ENCODE measurements at regions of chr3 and their contacts with region 1.

Region 1: GRCh38 chr3:114510201-114510600 is 216.4 kb downstream of the TIGIT start:
- DNase-seq: no peak
- H3K4me3 ChIP-seq: no peak overlapping the region
- H3K27ac ChIP-seq: no peak overlapping the region
- H3K4me1 ChIP-seq: peaks cover under 1% of the 10 kb centered on the region
- H3K27me3 ChIP-seq: no peaks in the 10 kb centered on the region
- CTCF ChIP-seq: no peak

Region 2: GRCh38 chr3:114408736-114409670 is 101.2 kb before region 1 on chr3:
- CTCF ChIA-PET with region 1: no interaction called
- dilution Hi-C with region 1: no loop called
- in situ Hi-C with region 1: no loop called
- intact Hi-C with region 1: no loop called
- DNase-seq: no peak
- H3K4me3 ChIP-seq: peak overlapping the region in 1 of 3 experiments; percentile 4
- H3K27ac ChIP-seq: no peak overlapping the region
- H3K4me1 ChIP-seq: peaks cover 36% of the 10 kb centered on the region
- H3K27me3 ChIP-seq: no peaks in the 10 kb centered on the region
- CTCF ChIP-seq: no peak

Region 3: DNA sequence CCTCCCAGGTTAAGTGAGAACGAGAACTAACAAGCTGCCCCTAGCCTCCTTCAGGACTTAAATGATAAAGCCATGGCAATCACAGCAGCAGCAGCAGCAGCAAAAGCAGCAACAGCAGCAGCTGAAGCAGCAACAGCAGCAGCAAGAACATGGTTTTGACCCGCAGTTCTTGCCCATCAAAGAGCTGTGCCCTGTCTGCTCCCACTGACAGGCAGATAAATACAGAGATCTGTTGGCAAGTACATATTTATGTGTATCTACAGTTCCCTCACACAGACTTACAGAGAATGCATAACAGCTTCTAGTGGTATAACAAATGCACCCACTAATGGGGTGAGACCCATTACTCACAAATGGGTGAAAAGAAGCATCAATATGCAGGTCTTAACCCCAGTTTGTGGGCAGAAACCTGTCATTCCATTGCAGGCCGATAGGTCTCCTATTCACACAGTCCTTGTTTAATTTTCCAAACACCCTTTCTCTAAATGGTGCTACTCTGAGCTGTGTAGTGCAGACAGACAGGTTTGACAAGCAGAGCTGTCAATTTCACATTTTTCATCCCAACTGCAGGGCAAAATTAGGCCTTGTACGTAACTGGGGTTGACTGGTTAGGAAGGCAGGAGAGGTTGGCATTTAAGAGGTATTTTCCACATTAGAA is 99.9 kb after region 1 on chr3:
- CTCF ChIA-PET with region 1: no interaction called
- dilution Hi-C with region 1: loop called (anchors 5 kb)
- in situ Hi-C with region 1: no loop called
- intact Hi-C with region 1: no loop called
- DNase-seq: no peak
- H3K4me3 ChIP-seq: no peak overlapping the region
- H3K27ac ChIP-seq: no peak overlapping the region
- H3K4me1 ChIP-seq: peaks cover 8% of the 10 kb centered on the region
- H3K27me3 ChIP-seq: no peaks in the 10 kb centered on the region
- CTCF ChIP-seq: no peak

Measured in mammary epithelial cell (primary cell).